ENCODE measurements at regions of chr14 and their contacts with region 1.

Region 1: GRCh38 chr14:57066887-57067513 is 201.7 kb downstream of the EXOC5 start:
- DNase-seq: peak; percentile 38
- ATAC-seq: no peak
- H3K4me3 ChIP-seq: no peak overlapping the region
- H3K4me3 Mint-ChIP-seq: no peak overlapping the region
- H3K27ac ChIP-seq: no peak overlapping the region
- H3K27ac Mint-ChIP-seq: no peak overlapping the region
- H3K4me1 ChIP-seq: no peaks in the 10 kb centered on the region
- H3K4me1 Mint-ChIP-seq: peaks cover 3% of the 10 kb centered on the region
- H3K27me3 ChIP-seq: peaks cover 0 to 9% (median 1%) of the 10 kb centered on the region in 4 experiments
- H3K27me3 Mint-ChIP-seq: peaks cover 33% of the 10 kb centered on the region
- CTCF ChIP-seq: peak; percentile 71

Region 2: GRCh38 chr14:56659964-56660551 is 406.9 kb before region 1 on chr14:
- CTCF ChIA-PET with region 1: no interaction called
- POLR2A ChIA-PET with region 1: no interaction called
- intact Hi-C with region 1: loop called (anchors 5 kb)
- DNase-seq: peak; percentile 7
- ATAC-seq: no peak
- H3K4me3 ChIP-seq: no peak overlapping the region
- H3K4me3 Mint-ChIP-seq: no peak overlapping the region
- H3K27ac ChIP-seq: no peak overlapping the region
- H3K27ac Mint-ChIP-seq: no peak overlapping the region
- H3K4me1 ChIP-seq: no peaks in the 10 kb centered on the region
- H3K4me1 Mint-ChIP-seq: no peaks in the 10 kb centered on the region
- H3K27me3 ChIP-seq: no peaks in the 10 kb centered on the region
- H3K27me3 Mint-ChIP-seq: no peaks in the 10 kb centered on the region
- CTCF ChIP-seq: peak; percentile 57